Posterior vena cava (tissue), 2 donors: ENCODE measurements at regions of chr19 and their contacts with region 1.

Region 1: DNA sequence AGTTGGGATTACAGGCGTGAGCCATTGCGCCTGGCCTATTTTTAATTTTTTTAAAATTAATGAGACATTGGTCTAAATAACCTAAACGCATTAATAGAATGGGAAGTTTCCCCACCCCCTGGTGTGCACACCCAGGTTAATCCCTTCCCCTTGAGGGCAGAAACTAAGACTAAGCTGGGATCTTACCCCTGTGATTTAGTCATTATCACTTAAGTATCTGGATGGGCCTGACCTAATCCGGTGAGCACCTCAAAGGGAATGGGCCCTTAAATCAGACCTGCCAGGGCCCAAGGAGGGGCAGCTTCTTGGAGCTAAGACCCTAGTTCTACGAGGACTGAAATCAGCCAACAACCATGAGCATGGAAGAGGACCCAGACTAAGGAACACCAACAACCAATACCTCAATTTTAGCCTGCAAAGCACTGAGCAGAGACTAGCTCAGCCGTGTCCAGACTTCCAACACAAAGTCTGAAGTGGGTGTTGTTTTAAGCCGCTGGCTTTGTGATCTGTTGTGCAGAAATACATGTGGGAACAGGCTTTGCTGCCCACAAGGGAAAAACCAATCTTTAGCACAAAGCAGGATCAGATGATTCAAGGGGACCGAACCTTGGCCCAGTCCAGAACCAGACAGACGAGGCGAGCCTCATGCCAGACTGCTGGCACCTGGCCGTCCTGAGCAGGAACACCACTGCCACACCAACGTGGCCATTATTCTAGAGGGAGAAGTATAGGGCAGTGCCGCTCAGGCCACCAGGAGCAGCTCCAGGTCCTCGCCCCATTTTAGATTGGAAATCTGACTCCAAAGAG is 7.1 kb downstream of the UBE2S start:
- DNase-seq: no peak

Region 2: DNA sequence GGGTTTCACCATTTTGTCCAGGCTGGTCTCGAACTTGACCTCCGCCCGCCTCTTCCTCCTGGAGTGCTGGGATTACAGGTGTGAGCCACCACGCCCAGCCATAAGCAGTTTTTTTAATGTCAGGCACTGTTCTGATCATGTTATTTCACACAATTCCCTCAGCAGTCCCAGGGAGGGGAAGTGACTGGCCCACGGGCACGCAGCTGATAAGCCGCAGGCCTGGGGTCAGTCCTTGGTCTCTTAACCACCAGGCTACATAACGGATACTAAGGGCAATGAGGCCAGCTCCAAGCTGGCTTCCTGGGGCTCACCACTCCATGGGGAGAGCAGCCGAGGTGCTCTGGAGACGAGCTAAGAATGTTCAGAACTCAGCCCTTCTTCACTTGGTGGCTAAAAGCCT is 103.2 kb before region 1 on chr19:
- intact Hi-C with region 1: no loop called
- DNase-seq: no peak

Region 3: GRCh38 chr19:55352040-55352439 is 48.4 kb before region 1 on chr19:
- intact Hi-C with region 1: loop called in 1 of 2 experiments (anchors 1 kb)
- DNase-seq: no peak

Region 4: GRCh38 chr19:55494172-55494761 is 93.8 kb after region 1 on chr19:
- intact Hi-C with region 1: no loop called
- DNase-seq: peak; percentile 88